B cell (primary cell): ENCODE measurements at regions of chr11 and their contacts with region 1.

Region 1: DNA sequence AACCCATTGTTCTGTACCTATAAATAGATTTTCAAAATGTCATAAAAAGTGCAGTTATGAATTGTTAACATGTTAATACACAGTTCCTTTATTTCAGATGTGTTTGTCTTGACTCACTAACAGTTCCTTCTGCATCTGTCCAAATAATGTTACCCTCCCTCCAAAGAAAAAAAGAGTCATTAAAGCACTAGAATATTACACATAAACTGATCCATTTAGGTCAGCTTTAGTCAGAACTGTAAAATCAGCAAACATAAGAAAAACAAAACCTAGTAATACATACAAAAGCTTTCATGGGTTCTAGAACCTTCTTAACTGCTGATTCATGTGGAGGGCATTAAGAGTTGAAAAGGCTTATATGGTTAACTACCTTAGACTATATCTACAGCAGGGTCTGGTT is 65.4 kb downstream of the SESN3 start:
- DNase-seq: no peak
- ATAC-seq: no peak
- H3K4me3 ChIP-seq: no peak overlapping the region
- H3K4me3 Mint-ChIP-seq: no peak overlapping the region
- H3K27ac ChIP-seq: no peak overlapping the region
- H3K27ac Mint-ChIP-seq: no peak overlapping the region
- H3K4me1 ChIP-seq: peaks cover 0 to 3% of the 10 kb centered on the region in 2 donors
- H3K4me1 Mint-ChIP-seq: peaks cover 30% of the 10 kb centered on the region
- H3K27me3 ChIP-seq: no peaks in the 10 kb centered on the region
- H3K27me3 Mint-ChIP-seq: no peaks in the 10 kb centered on the region
- CTCF ChIP-seq: no peak

Region 2: GRCh38 chr11:95143106-95143681 is 22.4 kb before region 1 on chr11:
- CTCF ChIA-PET with region 1: no interaction called
- POLR2A ChIA-PET with region 1: no interaction called
- intact Hi-C with region 1: no loop called
- DNase-seq: no peak
- ATAC-seq: no peak
- H3K4me3 ChIP-seq: no peak overlapping the region
- H3K4me3 Mint-ChIP-seq: no peak overlapping the region
- H3K27ac ChIP-seq: no peak overlapping the region
- H3K27ac Mint-ChIP-seq: no peak overlapping the region
- H3K4me1 ChIP-seq: no peaks in the 10 kb centered on the region
- H3K4me1 Mint-ChIP-seq: no peaks in the 10 kb centered on the region
- H3K27me3 ChIP-seq: no peaks in the 10 kb centered on the region
- H3K27me3 Mint-ChIP-seq: no peaks in the 10 kb centered on the region
- CTCF ChIP-seq: no peak

Region 3: DNA sequence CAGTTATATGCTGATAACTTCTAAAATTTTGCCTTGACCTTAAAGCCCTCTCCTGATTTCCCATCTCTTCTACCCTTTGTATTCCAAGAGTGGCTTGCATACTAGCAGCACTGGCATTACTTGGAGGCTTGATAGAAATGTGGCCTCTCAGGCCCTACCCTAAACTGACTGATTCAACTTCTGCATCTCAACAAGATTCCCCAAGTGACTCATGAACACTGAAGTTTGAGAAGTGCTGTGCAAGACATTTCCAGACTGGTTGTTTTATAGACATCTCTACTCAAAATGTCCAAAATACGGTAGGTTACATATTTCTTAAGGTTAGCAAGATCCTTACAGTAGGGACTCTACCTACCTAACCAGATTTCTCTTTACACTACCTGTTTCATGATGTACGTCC is 16.8 kb after region 1 on chr11:
- CTCF ChIA-PET with region 1: no interaction called
- POLR2A ChIA-PET with region 1: no interaction called
- intact Hi-C with region 1: loop called (anchors 2 kb)
- DNase-seq: no peak
- ATAC-seq: no peak
- H3K4me3 ChIP-seq: no peak overlapping the region
- H3K4me3 Mint-ChIP-seq: no peak overlapping the region
- H3K27ac ChIP-seq: peak overlapping the region in 1 of 2 donors; percentile 34
- H3K27ac Mint-ChIP-seq: peak overlapping the region; percentile 57
- H3K4me1 ChIP-seq: no peaks in the 10 kb centered on the region
- H3K4me1 Mint-ChIP-seq: peaks cover 16% of the 10 kb centered on the region
- H3K27me3 ChIP-seq: no peaks in the 10 kb centered on the region
- H3K27me3 Mint-ChIP-seq: no peaks in the 10 kb centered on the region
- CTCF ChIP-seq: no peak

Region 4: DNA sequence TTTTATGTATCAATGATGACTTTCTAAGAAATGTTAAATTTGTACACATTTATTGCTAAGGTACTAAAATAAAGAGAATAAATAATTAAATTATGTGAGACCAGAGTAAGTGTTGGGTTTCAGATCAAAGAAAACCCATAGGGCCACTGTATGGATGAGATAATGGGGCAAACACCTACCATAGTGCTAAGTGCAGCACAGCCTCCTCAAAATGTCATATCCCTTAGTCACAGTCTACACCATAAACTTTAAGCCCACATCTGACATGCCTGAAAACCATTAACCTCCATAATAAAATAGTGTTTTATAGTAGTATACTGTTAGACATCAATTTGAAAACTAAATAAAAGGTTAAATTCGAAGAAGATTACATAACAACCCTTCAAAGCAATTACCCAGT is 27.9 kb after region 1 on chr11:
- CTCF ChIA-PET with region 1: no interaction called
- POLR2A ChIA-PET with region 1: no interaction called
- intact Hi-C with region 1: loop called (anchors 5 kb)
- DNase-seq: no peak
- ATAC-seq: no peak
- H3K4me3 ChIP-seq: no peak overlapping the region
- H3K4me3 Mint-ChIP-seq: no peak overlapping the region
- H3K27ac ChIP-seq: no peak overlapping the region
- H3K27ac Mint-ChIP-seq: no peak overlapping the region
- H3K4me1 ChIP-seq: peaks cover 10 to 18% of the 10 kb centered on the region in 2 donors
- H3K4me1 Mint-ChIP-seq: peaks cover 42% of the 10 kb centered on the region
- H3K27me3 ChIP-seq: no peaks in the 10 kb centered on the region
- H3K27me3 Mint-ChIP-seq: no peaks in the 10 kb centered on the region
- CTCF ChIP-seq: no peak

Region 5: DNA sequence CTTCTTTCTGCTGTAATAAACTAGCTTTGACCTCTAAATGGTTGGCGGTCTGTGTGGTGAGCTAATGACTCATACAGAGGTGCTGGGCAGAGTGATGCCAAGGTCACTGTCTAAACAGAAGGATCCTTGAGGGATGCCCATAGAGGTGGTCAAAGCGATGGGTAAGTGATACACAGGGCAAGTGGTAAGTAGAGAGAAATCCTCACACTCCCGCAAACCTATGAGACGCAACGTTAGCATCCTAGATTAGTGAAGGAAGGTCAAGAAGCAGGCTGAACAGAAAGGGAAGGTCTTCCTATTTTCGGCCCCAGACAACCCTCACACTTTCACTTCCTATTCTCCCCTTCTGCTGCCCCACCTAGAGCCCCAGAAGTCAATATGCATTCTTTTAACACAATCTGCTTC is 131.0 kb after region 1 on chr11:
- CTCF ChIA-PET with region 1: no interaction called
- POLR2A ChIA-PET with region 1: no interaction called
- intact Hi-C with region 1: no loop called
- DNase-seq: peak; percentile 84
- ATAC-seq: peak; percentile 90
- H3K4me3 ChIP-seq: peak overlapping the region in 4 of 5 experiments; percentile 10 to 53 (median 26)
- H3K4me3 Mint-ChIP-seq: peak overlapping the region; percentile 82
- H3K27ac ChIP-seq: peak overlapping the region; percentile 81 to 82
- H3K27ac Mint-ChIP-seq: peak overlapping the region; percentile 95
- H3K4me1 ChIP-seq: peaks cover 44 to 47% of the 10 kb centered on the region in 2 donors
- H3K4me1 Mint-ChIP-seq: peaks cover 48% of the 10 kb centered on the region
- H3K27me3 ChIP-seq: no peaks in the 10 kb centered on the region
- H3K27me3 Mint-ChIP-seq: no peaks in the 10 kb centered on the region
- CTCF ChIP-seq: peak; percentile 9